Right ventricle myocardium inferior (tissue), 1 donor: ENCODE measurements at regions of chr20 and their contacts with region 1.

Region 1: DNA sequence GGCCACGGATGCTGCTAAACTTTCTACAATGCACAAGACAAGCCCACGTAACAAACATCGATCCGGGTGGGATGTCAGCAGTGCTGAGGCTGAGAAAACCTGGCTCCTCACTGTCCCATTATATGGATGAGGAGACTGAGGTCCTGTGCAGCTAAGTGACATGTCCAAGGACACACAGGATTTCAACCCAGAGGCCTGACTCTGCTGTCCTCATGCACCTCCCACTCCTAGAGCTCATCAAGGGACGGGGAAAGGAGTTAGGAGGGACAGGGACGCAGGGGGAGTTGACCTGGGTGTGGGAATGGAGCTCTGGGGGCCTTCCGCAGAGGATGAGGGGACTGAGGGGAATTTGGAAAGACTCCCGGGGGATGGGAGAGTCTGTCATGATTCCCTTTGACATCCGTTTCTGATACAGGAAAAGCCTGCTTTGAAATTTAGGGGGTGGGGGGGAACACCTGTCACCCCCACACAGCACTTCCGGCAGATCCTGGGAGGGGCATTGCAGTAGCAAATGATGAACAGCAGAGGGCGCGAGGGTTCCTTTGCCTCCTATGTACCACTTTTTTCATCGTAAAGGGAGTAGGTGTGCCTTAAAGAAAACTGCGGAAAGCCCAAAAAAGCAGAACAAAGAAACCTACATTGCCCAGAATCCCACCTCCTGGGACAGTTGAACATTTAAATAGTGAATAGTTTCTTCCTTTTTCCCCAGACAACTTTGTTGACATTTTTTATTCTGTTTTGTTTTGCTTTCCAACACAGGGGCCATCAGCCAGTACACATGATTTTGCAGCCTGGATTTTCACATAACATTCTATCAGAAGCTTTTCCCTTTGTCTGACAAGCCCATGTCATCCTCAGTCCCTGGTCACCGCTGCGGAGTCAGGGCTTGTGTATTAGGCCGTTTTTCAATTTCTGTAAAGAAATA is 48.6 kb downstream of the SLC2A10 start:
- DNase-seq: no peak
- ATAC-seq: no peak

Region 2: DNA sequence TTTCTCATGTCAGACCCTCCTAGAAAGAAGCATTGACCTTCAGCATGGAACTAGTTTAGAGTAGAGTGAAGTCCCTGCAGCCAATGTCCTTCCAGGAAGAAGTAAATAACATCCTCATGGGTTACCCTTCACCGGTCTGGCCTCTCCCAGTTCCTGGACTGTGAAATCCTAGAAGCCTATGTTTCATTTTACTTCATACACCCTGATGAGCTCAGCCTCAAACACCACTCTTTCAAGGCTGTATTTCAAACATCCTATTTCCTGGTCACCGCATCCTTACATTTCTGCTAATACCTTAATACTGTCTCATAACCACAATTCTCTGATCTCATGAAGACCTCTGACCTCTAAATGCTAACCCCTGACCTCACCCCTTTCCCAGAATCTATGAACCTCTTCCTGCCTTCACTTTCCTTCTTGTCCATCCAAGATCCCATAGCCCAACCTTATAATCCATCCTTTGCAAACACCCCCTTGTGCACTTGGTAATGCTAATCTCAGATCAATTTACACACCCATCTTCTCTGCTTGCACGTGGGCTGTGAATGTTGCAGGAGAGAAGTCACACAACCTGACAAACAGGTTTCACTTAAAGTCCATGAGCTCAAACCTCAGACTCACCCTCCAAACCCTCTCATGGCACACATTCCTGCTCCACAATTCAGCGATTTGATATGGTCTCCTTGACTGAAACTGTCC is 18.4 kb before region 1 on chr20:
- intact Hi-C with region 1: no loop called
- DNase-seq: no peak
- ATAC-seq: no peak

Region 3: GRCh38 chr20:46954490-46955038 is 196.5 kb after region 1 on chr20:
- intact Hi-C with region 1: no loop called
- DNase-seq: no peak
- ATAC-seq: no peak

Region 4: GRCh38 chr20:47150403-47151152 is 392.6 kb after region 1 on chr20:
- intact Hi-C with region 1: loop called (anchors 1 kb)
- DNase-seq: no peak
- ATAC-seq: peak; percentile 84